H1 (cell line): ENCODE measurements at regions of chr5 and their contacts with region 1.

Region 1: GRCh38 chr5:7078901-7079300 is 317.0 kb upstream of the ADCY2 start:
- DNase-seq: peak; percentile 31 to 61
- H3K4me3 ChIP-seq: no peak overlapping the region
- H3K27ac ChIP-seq: no peak overlapping the region
- H3K4me1 ChIP-seq: peaks cover 0 to 10% (median 7%) of the 10 kb centered on the region in 4 experiments; a peak in 5 of 7 replicates
- H3K27me3 ChIP-seq: no peaks in the 10 kb centered on the region
- CTCF ChIP-seq: peak; percentile 40 to 72 (median 61)
- EP300 ChIP-seq: no peak
- POLR2A ChIP-seq: no peak
- RAD21 ChIP-seq: peak; percentile 76 to 85

Region 2: DNA sequence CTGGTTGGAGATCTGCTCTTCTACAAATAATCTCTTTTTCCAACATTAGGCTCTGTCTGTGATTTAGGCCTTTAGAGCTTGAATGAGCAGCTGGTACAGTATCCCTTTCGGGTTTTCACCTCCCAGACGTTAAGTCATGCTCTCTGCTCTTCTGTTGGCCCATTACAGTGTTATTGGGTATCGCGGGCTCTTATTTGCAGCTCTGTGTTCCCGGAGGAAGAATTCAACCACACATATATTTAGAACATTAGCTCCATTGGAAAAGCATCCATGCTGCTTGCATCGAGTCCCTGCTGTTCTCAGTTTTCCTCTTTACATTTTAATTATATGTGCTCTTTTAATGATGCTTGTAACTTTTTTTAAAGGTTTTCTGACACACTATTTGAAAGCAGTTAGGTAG is 39.1 kb after region 1 on chr5:
- CTCF ChIA-PET with region 1: no interaction called
- POLR2A ChIA-PET with region 1: no interaction called
- DNase-seq: no peak
- H3K4me3 ChIP-seq: no peak overlapping the region
- H3K27ac ChIP-seq: no peak overlapping the region
- H3K4me1 ChIP-seq: no peaks in the 10 kb centered on the region
- H3K27me3 ChIP-seq: no peaks in the 10 kb centered on the region
- CTCF ChIP-seq: no peak
- EP300 ChIP-seq: no peak
- POLR2A ChIP-seq: no peak
- RAD21 ChIP-seq: no peak

Region 3: DNA sequence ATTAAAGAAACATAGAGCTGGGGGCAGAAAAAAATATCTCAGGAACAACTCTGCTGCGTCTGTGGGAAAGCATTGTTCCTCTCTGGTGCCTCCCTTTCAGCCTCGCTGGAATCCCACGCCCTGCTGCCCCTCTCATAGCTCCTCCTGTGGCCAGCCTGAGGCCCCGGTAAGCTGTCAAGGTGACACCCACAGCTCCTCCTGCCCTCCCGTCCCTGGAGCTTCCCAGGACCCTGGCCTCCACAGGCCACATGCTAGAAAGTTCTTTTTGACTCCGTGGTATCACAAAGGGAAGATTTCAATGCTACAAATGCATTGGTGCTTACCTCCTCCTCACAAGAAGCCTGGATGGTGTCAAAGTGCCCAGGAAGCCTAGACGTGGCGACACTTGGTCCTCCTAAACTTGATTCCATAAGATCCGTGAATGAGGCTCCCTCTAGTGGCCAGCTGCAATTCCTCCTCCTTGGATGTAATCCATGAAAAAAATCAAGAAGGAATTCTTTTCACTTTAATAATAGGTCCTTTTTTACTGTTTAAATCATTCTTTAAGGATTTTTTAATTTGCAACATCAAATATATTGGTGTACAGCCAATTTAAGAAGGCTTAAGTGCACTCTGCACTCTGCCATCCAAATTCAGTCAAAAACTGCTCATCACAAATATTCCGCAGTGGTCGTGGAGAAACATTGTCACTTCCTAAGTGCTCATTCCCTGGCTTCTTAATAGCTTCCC is 667.1 kb after region 1 on chr5:
- CTCF ChIA-PET with region 1: interaction called, 10 read pairs
- POLR2A ChIA-PET with region 1: no interaction called
- DNase-seq: peak; percentile 58 to 91
- H3K4me3 ChIP-seq: no peak overlapping the region
- H3K27ac ChIP-seq: no peak overlapping the region
- H3K4me1 ChIP-seq: peaks cover 0 to 2% (median under 1%) of the 10 kb centered on the region in 4 experiments; a peak in 1 of 7 replicates
- H3K27me3 ChIP-seq: no peaks in the 10 kb centered on the region
- CTCF ChIP-seq: peak; percentile 49 to 81 (median 66)
- EP300 ChIP-seq: no peak
- POLR2A ChIP-seq: no peak
- RAD21 ChIP-seq: peak; percentile 79